WTC11 (cell line): ENCODE measurements at regions of chr19 and their contacts with region 1.

Region 1: DNA sequence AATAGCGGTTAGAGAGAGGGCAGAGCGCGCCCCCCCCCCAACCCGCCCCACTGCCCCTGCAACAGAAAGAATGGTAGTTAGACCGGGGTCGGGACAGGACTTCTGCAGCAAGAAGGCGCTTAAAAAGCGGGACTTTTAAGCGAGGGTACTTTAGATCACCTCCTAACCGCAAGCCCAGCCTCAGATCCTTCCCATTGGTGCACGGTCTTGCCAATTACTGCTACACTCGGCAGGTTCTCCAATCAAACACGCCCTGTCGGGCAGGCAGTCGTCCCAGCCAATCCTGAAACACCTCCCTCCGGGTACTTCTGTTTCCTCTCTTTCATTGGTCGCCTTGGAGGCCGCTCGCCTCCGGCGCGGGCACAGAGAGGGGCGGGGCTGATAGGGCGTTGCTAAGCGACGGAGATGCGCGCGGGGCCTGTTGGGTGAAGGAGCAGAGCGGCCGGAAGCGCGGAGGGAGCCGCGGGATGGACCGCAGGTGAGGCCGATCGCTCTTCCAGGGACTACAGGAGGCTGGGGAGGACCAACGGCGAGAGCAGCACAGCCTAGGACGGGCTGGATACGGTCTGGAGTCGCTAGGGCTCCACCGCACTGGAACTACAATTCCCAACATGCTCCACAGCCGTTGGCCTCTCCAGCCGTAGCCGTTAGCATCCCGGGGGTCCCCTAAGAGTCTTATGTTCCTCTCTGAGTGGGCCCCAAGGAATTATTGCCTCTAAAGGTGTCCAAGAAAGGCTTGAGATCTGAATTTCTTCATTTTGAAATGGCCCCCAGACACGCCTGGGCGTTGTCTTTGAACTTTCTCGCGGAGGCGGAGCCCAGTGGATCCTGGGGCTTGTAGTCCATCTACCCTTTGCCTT is at the start of gene PROSER3:
- DNase-seq: peak; percentile 99
- ATAC-seq: peak; percentile 94
- H3K4me3 Mint-ChIP-seq: peak within 1 kb of the TSS; percentile 94
- H3K27ac Mint-ChIP-seq: peak within 1 kb of the TSS; percentile 82
- H3K4me1 Mint-ChIP-seq: peaks cover 16% of the 10 kb centered on the region
- H3K27me3 Mint-ChIP-seq: peaks cover 23% of the 10 kb centered on the region
- CTCF ChIP-seq: no peak
- total RNA-seq, gene PROSER3: 32.9 to 36.7 TPM (median 36.2 TPM) in 3 replicates

Region 2: GRCh38 chr19:35740423-35741202 is 17.4 kb before region 1 on chr19:
- CTCF ChIA-PET with region 1: interaction called, 13 read pairs
- POLR2A ChIA-PET with region 1: interaction called, 13 read pairs
- DNase-seq: peak; percentile 99
- ATAC-seq: peak; percentile 76
- H3K4me3 Mint-ChIP-seq: peak overlapping the region; percentile 81
- H3K27ac Mint-ChIP-seq: peak overlapping the region; percentile 99
- H3K4me1 Mint-ChIP-seq: peaks cover 11% of the 10 kb centered on the region
- H3K27me3 Mint-ChIP-seq: no peaks in the 10 kb centered on the region
- CTCF ChIP-seq: no peak

Region 3: DNA sequence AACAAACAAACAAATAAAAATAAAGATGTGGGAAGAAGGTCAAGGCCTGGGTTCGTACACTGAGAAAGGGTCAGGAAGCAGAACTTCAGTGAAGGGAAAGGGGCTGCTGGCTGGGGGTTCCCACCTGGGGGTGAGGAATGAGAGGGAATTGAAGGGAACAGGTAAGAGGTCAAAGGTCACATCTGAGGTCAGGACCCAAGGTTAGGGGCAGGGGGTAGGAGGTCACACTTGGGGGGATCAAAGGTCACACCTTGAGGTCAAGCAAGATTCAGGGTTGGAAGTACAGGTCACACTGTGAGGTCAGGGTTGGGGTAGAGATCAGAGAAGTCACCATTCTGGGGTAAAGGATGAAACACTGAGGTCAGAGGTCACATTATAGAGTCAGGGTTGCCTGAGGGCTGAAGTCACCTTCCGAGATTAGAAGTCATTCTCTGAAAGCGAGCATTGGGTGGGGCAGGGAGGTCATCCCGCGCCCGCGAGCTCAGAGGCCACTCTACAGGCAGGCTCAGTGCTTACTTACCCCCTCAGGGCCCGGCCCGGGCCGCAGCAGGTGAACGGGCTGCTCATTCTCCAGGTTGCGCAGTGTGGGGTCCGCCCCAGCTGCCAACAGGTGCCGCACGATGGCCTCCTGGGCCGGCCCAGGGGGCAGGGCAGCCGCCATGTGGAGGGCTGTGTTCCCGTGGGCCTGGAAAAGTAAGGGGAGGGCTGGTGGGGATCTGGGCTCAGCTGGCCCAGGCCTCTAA is 131.6 kb after region 1 on chr19:
- CTCF ChIA-PET with region 1: no interaction called
- POLR2A ChIA-PET with region 1: no interaction called
- DNase-seq: no peak
- ATAC-seq: no peak
- H3K4me3 Mint-ChIP-seq: no peak overlapping the region
- H3K27ac Mint-ChIP-seq: no peak overlapping the region
- H3K4me1 Mint-ChIP-seq: no peaks in the 10 kb centered on the region
- H3K27me3 Mint-ChIP-seq: no peaks in the 10 kb centered on the region
- CTCF ChIP-seq: no peak